Naive thymus-derived CD4-positive, alpha-beta T cell (primary cell): ENCODE measurements at regions of chr6 and their contacts with region 1.

Region 1: GRCh38 chr6:24867104-24867703 is 68.5 kb upstream of the ARMH2 start:
- DNase-seq: no peak
- ATAC-seq: peak; percentile 16
- H3K4me3 ChIP-seq: no peak overlapping the region
- H3K4me3 Mint-ChIP-seq: peak overlapping the region in 8 of 10 donors; percentile 10 to 66 (median 38)
- H3K27ac ChIP-seq: peak overlapping the region; percentile 58
- H3K27ac Mint-ChIP-seq: peak overlapping the region in 8 of 9 donors; percentile 60 to 98 (median 90)
- H3K4me1 ChIP-seq: peaks cover 25 to 74% of the 10 kb centered on the region in 2 donors
- H3K4me1 Mint-ChIP-seq: peaks cover 34 to 92% (median 76%) of the 10 kb centered on the region in 7 donors
- H3K27me3 ChIP-seq: no peaks in the 10 kb centered on the region
- H3K27me3 Mint-ChIP-seq: no peaks in the 10 kb centered on the region

Region 2: DNA sequence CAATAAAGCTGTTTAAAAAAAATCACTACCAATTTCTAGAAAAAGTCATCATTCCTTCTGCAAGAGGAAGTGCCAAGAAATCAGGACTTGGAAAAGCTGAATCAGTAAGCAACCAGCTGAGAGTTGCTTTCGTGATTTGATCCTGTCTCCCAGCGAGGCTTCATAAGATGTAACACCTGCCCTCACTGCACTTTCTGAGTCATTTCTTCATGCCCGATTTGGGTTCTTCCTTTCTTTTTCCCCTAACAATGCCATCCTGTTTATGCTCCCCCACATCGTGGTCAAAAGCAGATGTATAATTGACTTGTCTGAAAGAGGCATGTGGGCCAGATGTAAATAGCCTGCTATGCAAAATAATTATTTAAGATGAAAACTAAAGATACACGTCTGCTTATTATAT is 16.4 kb after region 1 on chr6:
- CTCF ChIA-PET with region 1: interaction called, 7 read pairs
- POLR2A ChIA-PET with region 1: interaction called, 8 read pairs
- intact Hi-C with region 1: loop called in 1 of 2 experiments (anchors 2 kb)
- DNase-seq: peak in 1 of 9 donors; percentile 34
- ATAC-seq: no peak
- H3K4me3 ChIP-seq: no peak overlapping the region
- H3K4me3 Mint-ChIP-seq: peak overlapping the region; percentile 29 to 82 (median 61)
- H3K27ac ChIP-seq: peak overlapping the region; percentile 57
- H3K27ac Mint-ChIP-seq: peak overlapping the region; percentile 3 to 93 (median 91)
- H3K4me1 ChIP-seq: peaks cover 59 to 63% of the 10 kb centered on the region in 2 donors
- H3K4me1 Mint-ChIP-seq: peaks cover 55 to 99% (median 90%) of the 10 kb centered on the region in 7 donors
- H3K27me3 ChIP-seq: no peaks in the 10 kb centered on the region
- H3K27me3 Mint-ChIP-seq: no peaks in the 10 kb centered on the region